ENCODE measurements at regions of chr16 and their contacts with region 1.

Region 1: DNA sequence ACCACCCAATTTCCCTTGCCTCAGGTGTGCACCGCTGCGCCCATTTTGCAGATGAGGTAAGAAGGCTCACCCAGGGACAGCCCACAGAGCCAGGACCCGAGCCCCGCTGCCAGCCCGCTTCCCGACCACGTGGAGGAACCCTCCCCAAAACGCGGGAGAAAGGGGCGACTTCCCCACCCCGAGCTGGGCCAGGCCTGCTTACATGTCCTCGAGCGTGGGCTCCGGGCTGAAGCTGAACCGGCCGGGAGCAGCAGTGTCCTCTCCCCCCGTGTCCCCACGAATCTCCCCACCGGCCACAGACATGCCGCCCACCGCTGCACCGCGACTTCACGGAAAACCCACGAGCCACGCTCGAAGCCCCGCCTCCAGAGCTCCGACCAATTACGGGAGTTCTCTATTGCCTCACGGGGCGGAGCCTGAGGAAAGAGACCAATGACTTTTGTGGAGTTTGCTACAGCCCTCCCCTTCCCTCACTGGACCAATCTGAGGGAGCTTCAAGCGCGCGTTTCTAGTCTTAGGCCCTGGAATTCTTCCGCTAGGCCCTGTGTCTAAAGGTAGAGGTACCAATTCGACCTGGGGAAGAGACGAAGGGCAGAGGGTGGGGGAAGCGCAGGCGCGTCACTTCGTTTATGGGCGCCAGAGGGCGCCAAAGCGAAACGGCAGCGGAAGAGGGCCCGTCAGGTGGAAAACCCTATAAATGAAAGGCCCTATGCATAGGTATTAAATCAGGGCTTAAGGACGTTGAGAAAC is at the start of gene DCTPP1:
- DNase-seq: peak; percentile 98
- H3K4me3 Mint-ChIP-seq: no peak within 1 kb of the TSS
- H3K27ac Mint-ChIP-seq: no peak within 1 kb of the TSS
- H3K4me1 Mint-ChIP-seq: peaks cover 26% of the 10 kb centered on the region
- H3K27me3 Mint-ChIP-seq: no peaks in the 10 kb centered on the region

Region 2: DNA sequence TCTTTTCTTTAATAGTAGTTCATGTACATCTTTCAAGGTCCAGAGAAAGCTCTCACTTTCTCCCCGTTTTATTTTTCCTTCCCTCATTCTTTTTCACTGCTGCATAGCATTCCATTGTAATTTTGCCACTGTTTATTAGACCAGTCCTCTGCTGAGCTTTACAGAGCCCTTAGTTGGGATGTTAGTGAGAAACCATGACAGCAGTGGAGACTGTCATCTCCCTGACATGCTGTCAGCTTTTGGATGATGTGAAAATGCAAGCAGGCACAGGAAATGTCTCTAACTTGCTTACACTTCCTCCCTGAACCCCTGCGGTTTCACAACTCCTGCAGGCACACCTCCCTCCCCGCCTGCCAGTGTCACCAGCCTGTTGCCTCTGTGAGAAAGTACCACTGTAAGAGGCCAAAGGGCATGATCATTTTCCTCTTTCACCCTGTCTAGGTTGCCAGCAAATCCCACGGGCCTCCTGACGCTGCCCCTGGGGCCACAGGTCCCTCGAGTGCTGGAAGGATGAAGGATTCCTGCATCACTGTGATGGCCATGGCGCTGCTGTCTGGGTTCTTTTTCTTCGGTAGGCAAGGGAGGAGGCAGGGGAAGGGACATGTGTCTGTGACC is 42.6 kb after region 1 on chr16 and contains the start of gene ITGAL:
- CTCF ChIA-PET with region 1: interaction called, 12 read pairs
- DNase-seq: peak; percentile 91
- H3K4me3 Mint-ChIP-seq: peak within 1 kb of the TSS; percentile 99
- H3K27ac Mint-ChIP-seq: peak within 1 kb of the TSS; percentile 97
- H3K4me1 Mint-ChIP-seq: peaks cover 73% of the 10 kb centered on the region
- H3K27me3 Mint-ChIP-seq: no peaks in the 10 kb centered on the region

Region 3: DNA sequence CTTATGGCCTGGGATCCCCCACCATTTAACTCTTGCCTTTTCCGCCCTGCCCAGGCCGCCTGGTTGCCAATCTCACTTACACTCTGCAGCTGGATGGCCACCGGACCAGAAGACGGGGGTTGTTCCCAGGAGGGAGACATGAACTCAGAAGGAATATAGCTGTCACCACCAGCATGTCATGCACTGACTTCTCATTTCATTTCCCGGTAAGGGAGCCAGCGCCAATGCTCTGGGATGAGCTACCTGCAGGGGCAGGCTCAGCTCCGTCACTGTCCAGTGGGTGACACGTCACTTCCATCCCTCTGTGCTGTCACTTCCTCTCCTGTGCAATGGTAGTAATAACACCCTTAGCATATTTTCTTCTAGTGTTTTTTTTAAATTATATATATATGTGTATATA is 69.4 kb after region 1 on chr16:
- CTCF ChIA-PET with region 1: interaction called, 16 read pairs
- DNase-seq: no peak
- H3K4me3 Mint-ChIP-seq: no peak overlapping the region
- H3K27ac Mint-ChIP-seq: no peak overlapping the region
- H3K4me1 Mint-ChIP-seq: peaks cover 23% of the 10 kb centered on the region
- H3K27me3 Mint-ChIP-seq: peaks cover 4% of the 10 kb centered on the region

Region 4: GRCh38 chr16:30519120-30520049 is 89.5 kb after region 1 on chr16:
- CTCF ChIA-PET with region 1: no interaction called
- DNase-seq: no peak
- H3K4me3 Mint-ChIP-seq: no peak overlapping the region
- H3K27ac Mint-ChIP-seq: peak overlapping the region; percentile 15
- H3K4me1 Mint-ChIP-seq: peaks cover 16% of the 10 kb centered on the region
- H3K27me3 Mint-ChIP-seq: no peaks in the 10 kb centered on the region

Region 5: GRCh38 chr16:30602616-30603277 is 172.9 kb after region 1 on chr16:
- CTCF ChIA-PET with region 1: interaction called, 23 read pairs
- DNase-seq: no peak
- H3K4me3 Mint-ChIP-seq: no peak overlapping the region
- H3K27ac Mint-ChIP-seq: no peak overlapping the region
- H3K4me1 Mint-ChIP-seq: peaks cover 14% of the 10 kb centered on the region
- H3K27me3 Mint-ChIP-seq: no peaks in the 10 kb centered on the region

Region 6: DNA sequence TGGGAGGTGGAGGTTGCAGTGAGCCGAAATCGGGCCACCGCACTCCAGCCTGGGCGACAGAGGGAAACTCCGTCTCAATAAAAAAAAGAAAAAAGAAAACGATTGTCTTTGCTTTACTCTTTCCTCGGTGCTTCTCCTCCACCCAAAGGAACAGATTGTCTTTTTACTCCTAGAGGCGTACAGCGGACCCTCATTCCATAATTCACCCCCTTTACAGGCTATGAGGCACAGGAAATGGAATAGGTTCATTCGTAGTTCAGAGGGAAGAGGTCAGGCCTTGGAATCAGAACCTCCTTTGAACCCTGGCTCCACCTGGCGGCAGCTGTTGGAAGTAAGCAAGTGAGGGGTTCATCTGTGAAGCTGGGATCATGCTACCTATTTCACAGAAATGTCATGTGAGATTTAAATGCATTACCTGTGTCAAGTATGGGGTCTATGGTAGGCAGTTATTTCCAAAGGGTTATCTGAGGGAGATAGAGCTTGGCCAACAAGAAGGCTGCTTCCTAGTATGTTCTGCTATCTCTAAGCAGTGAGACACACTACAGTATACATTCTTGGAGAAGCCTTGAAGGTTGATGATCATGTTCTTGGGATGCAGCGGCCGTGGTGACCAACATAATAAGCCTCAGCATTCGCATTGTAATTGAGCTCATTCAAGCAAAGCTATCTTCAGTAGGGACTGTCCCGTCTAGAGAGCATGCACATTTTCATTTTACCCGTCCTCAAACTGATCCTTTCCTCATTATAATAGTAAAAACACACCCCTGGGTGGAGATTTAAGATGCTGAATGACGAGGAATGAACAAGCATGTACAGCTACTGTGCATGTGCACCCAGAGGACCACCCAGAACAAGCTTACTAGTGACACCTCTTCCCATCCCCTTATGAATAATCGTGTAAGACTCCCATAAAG is 199.0 kb after region 1 on chr16:
- CTCF ChIA-PET with region 1: interaction called, 17 read pairs
- DNase-seq: peak; percentile 92
- H3K4me3 Mint-ChIP-seq: no peak overlapping the region
- H3K27ac Mint-ChIP-seq: no peak overlapping the region
- H3K4me1 Mint-ChIP-seq: peaks cover 14% of the 10 kb centered on the region
- H3K27me3 Mint-ChIP-seq: peaks cover 17% of the 10 kb centered on the region